ENCODE measurements at regions of chr12 and their contacts with region 1.

Region 1: GRCh38 chr12:27237790-27238771 is 6.0 kb upstream of the STK38L start:
- H3K4me3 Mint-ChIP-seq: peak overlapping the region; percentile 20
- H3K27ac Mint-ChIP-seq: peak overlapping the region; percentile 84
- H3K4me1 Mint-ChIP-seq: peaks cover 38% of the 10 kb centered on the region
- H3K27me3 Mint-ChIP-seq: no peaks in the 10 kb centered on the region

Region 2: GRCh38 chr12:27179400-27180214 is 58.5 kb before region 1 on chr12:
- intact Hi-C with region 1: loop called (anchors 2 kb)
- H3K4me3 Mint-ChIP-seq: no peak overlapping the region
- H3K27ac Mint-ChIP-seq: peak overlapping the region; percentile 77
- H3K4me1 Mint-ChIP-seq: peaks cover 43% of the 10 kb centered on the region
- H3K27me3 Mint-ChIP-seq: no peaks in the 10 kb centered on the region

Measured in dendritic cell treated with granulocyte-macrophage colony-stimulating factor and Interleukin-4, amounts not matched to agents 40 ng/mL and 50 ng/mL, for 4 days (primary cell).